ENCODE measurements at regions of chr14 and their contacts with region 1.

Region 1: GRCh38 chr14:65412032-65412846 is at the start of gene FUT8:
- DNase-seq: peak; percentile 96
- H3K4me3 Mint-ChIP-seq: peak within 1 kb of the TSS; percentile 98
- H3K27ac Mint-ChIP-seq: peak within 1 kb of the TSS; percentile 96
- H3K4me1 Mint-ChIP-seq: peaks cover 34% of the 10 kb centered on the region
- H3K27me3 Mint-ChIP-seq: no peaks in the 10 kb centered on the region
- total RNA-seq, gene FUT8: 50.7 to 51.4 TPM

Region 2: DNA sequence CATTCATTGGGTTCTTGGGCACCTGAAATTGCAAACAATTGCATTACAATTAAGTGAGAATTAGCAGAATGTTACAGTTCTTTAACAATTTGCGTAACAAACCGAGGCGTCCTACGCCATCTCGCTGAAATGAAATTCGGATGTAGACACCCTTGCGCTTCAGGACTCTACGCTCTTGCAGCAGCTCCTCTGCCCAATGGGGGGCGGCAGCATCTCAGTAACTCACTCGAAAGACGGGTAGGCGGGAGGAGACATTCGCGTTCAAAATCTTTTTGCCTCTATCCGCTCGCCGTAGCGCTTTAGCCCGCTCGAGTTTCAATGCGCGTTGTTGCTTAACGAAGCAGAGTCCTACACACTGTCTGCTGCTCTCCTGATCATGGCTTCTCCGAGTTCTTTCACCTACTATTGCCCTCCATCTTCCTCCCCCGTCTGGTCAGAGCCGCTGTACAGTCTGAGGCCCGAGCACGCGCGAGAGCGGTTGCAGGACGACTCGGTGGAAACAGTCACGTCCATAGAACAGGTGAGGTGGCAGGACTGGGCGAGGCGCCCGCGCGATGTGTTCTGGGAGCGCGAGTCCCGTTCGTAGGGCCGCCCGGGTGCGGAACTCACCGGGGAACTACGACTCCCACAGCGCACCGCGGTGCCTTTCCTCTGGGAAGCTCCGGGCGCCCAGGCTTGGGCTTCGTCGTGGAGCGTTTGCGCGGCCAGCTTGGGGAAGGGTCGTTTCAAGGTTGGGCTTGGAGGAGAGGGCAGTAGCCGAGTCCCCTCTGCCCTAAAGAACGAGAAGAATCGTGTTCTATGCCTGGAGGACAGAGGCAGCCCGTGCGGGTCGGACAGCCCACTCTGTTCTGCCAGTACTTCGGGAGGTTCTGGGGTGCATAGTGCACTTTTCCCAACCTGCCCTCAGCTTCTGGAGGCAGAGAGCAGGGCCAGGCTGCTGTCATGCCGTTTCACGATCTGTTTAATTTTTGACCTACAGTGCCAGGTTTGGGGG is 425.4 kb before region 1 on chr14 and contains the start of gene FNTB:
- CTCF ChIA-PET with region 1: interaction called, 3 read pairs
- POLR2A ChIA-PET with region 1: no interaction called
- intact Hi-C with region 1: loop called (anchors 2 kb)
- DNase-seq: peak; percentile 95
- H3K4me3 Mint-ChIP-seq: peak within 1 kb of the TSS; percentile 98
- H3K27ac Mint-ChIP-seq: peak within 1 kb of the TSS; percentile 98
- H3K4me1 Mint-ChIP-seq: peaks cover 39% of the 10 kb centered on the region
- H3K27me3 Mint-ChIP-seq: no peaks in the 10 kb centered on the region
- total RNA-seq, gene FNTB: 8.8 to 12.3 TPM

Region 3: DNA sequence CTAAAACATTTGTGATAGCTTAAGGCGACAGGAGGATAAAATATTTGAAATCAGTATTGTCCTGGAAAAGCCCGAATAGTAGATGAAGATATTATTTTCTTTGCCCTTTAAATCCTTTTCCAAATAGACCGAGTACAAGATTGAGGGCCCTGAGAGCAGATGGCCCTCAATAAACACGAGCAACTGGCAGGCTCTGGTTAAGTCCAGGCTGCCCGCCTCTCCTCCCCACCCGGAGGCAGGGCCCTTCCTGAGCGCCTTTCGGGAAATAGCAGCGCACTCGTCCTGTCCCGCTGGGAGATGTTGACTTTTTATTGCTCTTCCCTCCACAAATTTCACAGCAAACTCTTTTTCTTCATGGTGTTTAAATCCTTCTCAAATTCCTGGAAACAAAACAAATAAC is 259.1 kb before region 1 on chr14:
- CTCF ChIA-PET with region 1: no interaction called
- POLR2A ChIA-PET with region 1: no interaction called
- intact Hi-C with region 1: no loop called
- DNase-seq: no peak
- H3K4me3 Mint-ChIP-seq: no peak overlapping the region
- H3K27ac Mint-ChIP-seq: no peak overlapping the region
- H3K4me1 Mint-ChIP-seq: no peaks in the 10 kb centered on the region
- H3K27me3 Mint-ChIP-seq: no peaks in the 10 kb centered on the region

Region 4: GRCh38 chr14:65170768-65171507 is 241.3 kb before region 1 on chr14:
- CTCF ChIA-PET with region 1: interaction called, 57 read pairs
- POLR2A ChIA-PET with region 1: interaction called, 4 read pairs
- intact Hi-C with region 1: no loop called
- DNase-seq: peak; percentile 72
- H3K4me3 Mint-ChIP-seq: peak overlapping the region; percentile 68
- H3K27ac Mint-ChIP-seq: no peak overlapping the region
- H3K4me1 Mint-ChIP-seq: peaks cover 14% of the 10 kb centered on the region
- H3K27me3 Mint-ChIP-seq: peaks cover 6% of the 10 kb centered on the region

Region 5: DNA sequence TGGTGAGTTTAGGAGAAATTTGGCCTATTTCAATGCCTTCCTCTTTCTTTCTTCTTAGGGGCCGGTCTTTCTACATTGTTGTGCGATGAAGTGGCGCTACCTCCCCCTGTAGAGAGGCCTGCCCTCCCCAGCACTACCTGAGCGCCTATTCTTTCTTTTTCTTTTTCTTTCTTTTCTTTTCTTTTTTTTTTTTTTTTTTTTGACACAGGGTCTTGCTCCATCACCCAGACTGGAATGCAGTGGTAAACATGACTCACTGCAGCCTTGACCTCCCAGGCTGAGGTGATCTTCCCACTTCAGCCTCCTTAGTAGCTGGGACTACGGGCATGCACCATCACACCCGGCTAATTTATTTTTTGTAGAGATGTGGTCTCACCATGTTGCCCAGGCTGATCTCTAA is 173.8 kb before region 1 on chr14:
- CTCF ChIA-PET with region 1: no interaction called
- POLR2A ChIA-PET with region 1: no interaction called
- intact Hi-C with region 1: no loop called
- DNase-seq: no peak
- H3K4me3 Mint-ChIP-seq: no peak overlapping the region
- H3K27ac Mint-ChIP-seq: no peak overlapping the region
- H3K4me1 Mint-ChIP-seq: peaks cover 10% of the 10 kb centered on the region
- H3K27me3 Mint-ChIP-seq: no peaks in the 10 kb centered on the region

Region 6: DNA sequence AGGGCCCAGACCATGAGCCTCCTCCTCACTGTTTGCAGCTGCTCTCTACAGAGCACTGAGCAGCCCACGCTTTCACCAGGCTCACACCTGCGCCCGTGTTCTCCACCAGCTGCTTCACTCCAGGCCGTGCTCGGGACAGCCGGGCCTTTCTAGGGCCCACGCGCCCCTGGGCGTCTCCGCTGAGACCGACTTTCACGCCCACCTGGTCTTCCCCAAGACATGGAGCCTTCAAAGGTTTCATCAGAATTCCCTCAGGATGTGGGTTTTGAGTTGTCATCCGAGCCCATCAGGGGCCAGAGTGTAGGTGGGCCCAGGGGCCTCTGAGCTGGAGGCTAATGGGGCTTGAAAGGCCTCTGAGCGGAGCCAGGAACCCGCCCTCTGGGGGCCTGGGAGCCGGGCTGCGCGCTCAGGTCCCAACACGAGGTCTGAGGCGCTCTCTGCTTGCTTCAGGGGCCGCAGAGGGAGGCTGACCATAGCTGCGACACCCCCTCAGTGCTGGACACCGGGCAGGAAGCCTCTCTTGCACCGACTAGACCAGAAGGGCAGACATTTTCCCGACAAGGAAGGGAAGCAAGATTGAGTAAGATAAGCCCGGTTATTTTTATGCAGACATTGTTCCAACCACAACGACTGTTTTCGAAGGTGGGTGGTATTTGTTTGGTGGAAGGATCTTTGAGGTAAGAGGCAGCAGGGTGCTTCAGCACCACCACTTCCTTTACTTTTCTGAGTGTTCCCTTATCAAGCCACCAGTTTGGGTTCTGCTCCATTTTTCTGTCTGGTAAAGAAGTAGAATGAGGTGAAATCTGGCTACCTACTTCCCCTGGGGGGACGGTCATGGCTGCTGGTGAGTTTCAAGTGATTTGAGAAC is 124.7 kb before region 1 on chr14:
- CTCF ChIA-PET with region 1: interaction called, 24 read pairs
- POLR2A ChIA-PET with region 1: interaction called, 16 read pairs
- intact Hi-C with region 1: loop called (anchors 1 kb)
- DNase-seq: peak; percentile 69
- H3K4me3 Mint-ChIP-seq: peak overlapping the region; percentile 80
- H3K27ac Mint-ChIP-seq: peak overlapping the region; percentile 96
- H3K4me1 Mint-ChIP-seq: peaks cover 64% of the 10 kb centered on the region
- H3K27me3 Mint-ChIP-seq: no peaks in the 10 kb centered on the region

Region 7: DNA sequence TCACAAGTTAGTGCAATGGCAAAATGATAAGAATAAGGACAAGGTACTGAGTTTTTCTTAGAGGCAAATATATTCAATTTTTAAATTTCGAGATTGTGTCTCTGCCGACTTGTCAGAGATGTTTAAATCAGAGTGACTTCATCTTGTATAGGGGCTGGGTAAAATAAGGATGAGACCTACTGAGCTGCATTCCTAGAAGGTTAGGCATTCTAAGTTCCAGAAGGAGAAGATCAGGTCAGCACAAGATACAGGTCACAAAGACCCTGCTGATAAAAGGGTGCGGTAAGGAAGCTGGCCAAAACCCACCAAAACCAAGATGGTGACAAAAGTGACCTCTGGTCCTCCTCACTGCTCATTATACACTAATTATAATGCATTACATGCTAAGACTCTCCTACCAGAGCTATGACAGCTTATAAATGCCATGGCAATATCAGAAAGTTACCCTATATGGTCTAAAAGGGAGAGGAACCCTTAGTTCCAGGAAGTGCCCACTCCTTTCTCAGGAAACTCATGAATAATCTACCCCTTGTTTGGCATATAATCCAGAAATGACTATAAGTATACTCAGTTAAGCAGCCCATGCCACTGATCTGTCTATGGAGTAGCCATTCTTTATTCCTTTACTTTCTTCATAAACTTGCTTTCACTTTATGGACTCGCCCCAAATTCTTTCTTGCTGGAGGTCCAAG is 42.8 kb before region 1 on chr14:
- CTCF ChIA-PET with region 1: no interaction called
- POLR2A ChIA-PET with region 1: no interaction called
- intact Hi-C with region 1: loop called (anchors 2 kb)
- DNase-seq: no peak
- H3K4me3 Mint-ChIP-seq: no peak overlapping the region
- H3K27ac Mint-ChIP-seq: peak overlapping the region; percentile 78
- H3K4me1 Mint-ChIP-seq: peaks cover 40% of the 10 kb centered on the region
- H3K27me3 Mint-ChIP-seq: no peaks in the 10 kb centered on the region

Region 8: GRCh38 chr14:65604936-65605335 is 192.7 kb after region 1 on chr14:
- CTCF ChIA-PET with region 1: no interaction called
- POLR2A ChIA-PET with region 1: no interaction called
- intact Hi-C with region 1: loop called (anchors 1 kb)
- DNase-seq: no peak
- H3K4me3 Mint-ChIP-seq: no peak overlapping the region
- H3K27ac Mint-ChIP-seq: no peak overlapping the region
- H3K4me1 Mint-ChIP-seq: peaks cover 5% of the 10 kb centered on the region
- H3K27me3 Mint-ChIP-seq: no peaks in the 10 kb centered on the region

Region 9: GRCh38 chr14:65676361-65676998 is 264.2 kb after region 1 on chr14:
- CTCF ChIA-PET with region 1: no interaction called
- POLR2A ChIA-PET with region 1: no interaction called
- intact Hi-C with region 1: no loop called
- DNase-seq: no peak
- H3K4me3 Mint-ChIP-seq: no peak overlapping the region
- H3K27ac Mint-ChIP-seq: no peak overlapping the region
- H3K4me1 Mint-ChIP-seq: no peaks in the 10 kb centered on the region
- H3K27me3 Mint-ChIP-seq: no peaks in the 10 kb centered on the region

Region 10: GRCh38 chr14:65847075-65847847 is 435.0 kb after region 1 on chr14:
- CTCF ChIA-PET with region 1: interaction called, 6 read pairs
- POLR2A ChIA-PET with region 1: interaction called, 3 read pairs
- intact Hi-C with region 1: loop called (anchors 1 kb)
- DNase-seq: peak; percentile 86
- H3K4me3 Mint-ChIP-seq: peak overlapping the region; percentile 22
- H3K27ac Mint-ChIP-seq: peak overlapping the region; percentile 79
- H3K4me1 Mint-ChIP-seq: peaks cover 66% of the 10 kb centered on the region
- H3K27me3 Mint-ChIP-seq: no peaks in the 10 kb centered on the region